GM12878 (cell line): ENCODE measurements at regions of chr3 and their contacts with region 1.

Region 1: GRCh38 chr3:141402476-141403171 is 34.3 kb downstream of the ZBTB38 start:
- DNase-seq: no peak
- ATAC-seq: peak; percentile 61
- H3K4me3 ChIP-seq: peak overlapping the region; percentile 72
- H3K27ac ChIP-seq: peak overlapping the region; percentile 92
- H3K4me1 ChIP-seq: peaks cover 29% of the 10 kb centered on the region
- H3K27me3 ChIP-seq: no peaks in the 10 kb centered on the region
- CTCF ChIP-seq: no peak
- EP300 ChIP-seq: no peak
- POLR2A ChIP-seq: peak; percentile 63
- RAD21 ChIP-seq: no peak

Region 2: DNA sequence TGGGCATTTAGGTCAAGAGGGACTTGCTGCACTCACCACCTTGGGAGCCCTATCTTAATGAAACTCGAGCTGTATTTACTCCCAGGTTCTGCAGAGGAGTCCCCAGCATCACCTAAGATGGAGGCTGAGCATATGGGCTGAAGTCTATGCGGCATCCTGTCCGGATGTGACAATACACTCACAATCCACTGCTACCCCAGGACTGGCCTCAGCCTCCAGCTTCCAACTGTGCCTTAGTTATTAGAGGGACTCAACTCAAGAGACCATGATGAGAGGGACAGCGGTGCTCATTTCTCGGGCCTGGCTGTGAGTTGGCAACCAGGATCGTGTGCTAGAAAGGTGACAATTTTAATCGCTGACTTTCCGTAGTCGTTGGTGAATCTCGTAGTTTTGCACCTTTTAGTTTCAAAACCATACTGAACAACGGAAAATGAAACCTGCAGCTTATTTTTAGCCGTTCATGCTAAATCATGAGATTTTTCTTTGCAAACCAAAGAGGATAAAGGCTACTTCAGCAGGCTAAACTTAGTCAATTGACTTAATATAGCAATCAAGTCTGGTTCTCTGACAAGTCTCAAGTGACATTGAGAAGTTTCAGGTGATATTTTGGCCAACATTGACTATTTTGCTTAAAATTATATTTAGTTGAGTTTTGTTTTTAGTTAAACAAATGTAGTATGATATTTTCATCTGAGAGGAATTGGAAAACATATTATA is 23.2 kb before region 1 on chr3:
- CTCF ChIA-PET with region 1: interaction called, 56 read pairs
- POLR2A ChIA-PET with region 1: interaction called, 453 read pairs
- RAD21 ChIA-PET with region 1: interaction called, 387 read pairs
- SMC1A ChIA-PET with region 1: interaction called, 573 read pairs
- in situ Hi-C with region 1: no loop called
- intact Hi-C with region 1: no loop called
- DNase-seq: peak; percentile 95
- ATAC-seq: peak; percentile 62
- H3K4me3 ChIP-seq: peak overlapping the region; percentile 41; the same call in 1 of the 2 replicates
- H3K27ac ChIP-seq: peak overlapping the region; percentile 94
- H3K4me1 ChIP-seq: peaks cover 81% of the 10 kb centered on the region
- H3K27me3 ChIP-seq: no peaks in the 10 kb centered on the region
- CTCF ChIP-seq: no peak
- EP300 ChIP-seq: peak; percentile 93 to 98
- POLR2A ChIP-seq: peak; percentile 68
- RAD21 ChIP-seq: peak; percentile 21; the same call in 1 of the 2 replicates

Region 3: GRCh38 chr3:141386611-141387111 is 16.0 kb before region 1 on chr3:
- CTCF ChIA-PET with region 1: interaction called, 56 read pairs
- POLR2A ChIA-PET with region 1: interaction called, 453 read pairs
- RAD21 ChIA-PET with region 1: interaction called, 387 read pairs
- SMC1A ChIA-PET with region 1: interaction called, 573 read pairs
- in situ Hi-C with region 1: no loop called
- intact Hi-C with region 1: no loop called
- DNase-seq: no peak
- ATAC-seq: peak; percentile 58
- H3K4me3 ChIP-seq: peak overlapping the region; percentile 67
- H3K27ac ChIP-seq: peak overlapping the region; percentile 94
- H3K4me1 ChIP-seq: peaks cover 30% of the 10 kb centered on the region
- H3K27me3 ChIP-seq: no peaks in the 10 kb centered on the region
- CTCF ChIP-seq: no peak
- EP300 ChIP-seq: no peak
- POLR2A ChIP-seq: peak; percentile 93
- RAD21 ChIP-seq: no peak

Region 4: DNA sequence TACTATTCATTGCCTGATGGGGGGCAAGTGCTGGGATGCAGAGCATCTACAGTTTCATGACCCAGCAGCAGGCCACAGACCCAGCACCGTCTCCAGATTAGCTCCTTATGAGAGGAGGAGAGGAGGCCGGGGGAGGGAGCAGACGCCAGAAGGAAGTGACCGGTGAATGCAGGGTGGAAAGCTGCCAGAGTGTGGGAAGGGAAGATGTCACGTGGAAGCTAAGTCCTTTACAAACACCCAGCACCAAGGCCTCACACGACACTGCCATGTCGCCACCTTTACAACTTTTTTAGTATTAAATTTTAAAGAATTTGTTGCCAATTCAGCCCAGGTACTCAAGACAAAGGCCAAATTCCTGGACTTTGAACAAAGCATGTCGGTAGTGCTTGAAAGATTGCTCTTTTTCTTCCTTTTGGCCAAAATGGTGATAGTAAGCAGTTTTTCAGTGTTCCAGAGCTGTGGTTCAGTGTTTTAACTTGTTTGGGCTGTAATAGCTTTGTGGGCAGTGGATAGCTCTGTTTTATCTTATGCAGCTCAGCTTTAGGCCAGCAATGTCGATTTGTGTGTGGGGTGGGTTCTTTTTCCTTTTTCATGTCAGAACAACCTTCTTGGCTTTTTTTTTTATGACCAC is 23.9 kb after region 1 on chr3:
- CTCF ChIA-PET with region 1: interaction called, 5 read pairs
- POLR2A ChIA-PET with region 1: interaction called, 3 read pairs
- RAD21 ChIA-PET with region 1: interaction called, 3 read pairs
- SMC1A ChIA-PET with region 1: interaction called, 12 read pairs
- in situ Hi-C with region 1: no loop called
- intact Hi-C with region 1: no loop called
- DNase-seq: no peak
- ATAC-seq: no peak
- H3K4me3 ChIP-seq: no peak overlapping the region
- H3K27ac ChIP-seq: no peak overlapping the region
- H3K4me1 ChIP-seq: peaks cover 7% of the 10 kb centered on the region
- H3K27me3 ChIP-seq: no peaks in the 10 kb centered on the region
- CTCF ChIP-seq: no peak
- EP300 ChIP-seq: no peak
- POLR2A ChIP-seq: no peak
- RAD21 ChIP-seq: no peak

Region 5: GRCh38 chr3:141680620-141681389 is 278.2 kb after region 1 on chr3:
- CTCF ChIA-PET with region 1: no interaction called
- POLR2A ChIA-PET with region 1: no interaction called
- RAD21 ChIA-PET with region 1: no interaction called
- SMC1A ChIA-PET with region 1: no interaction called
- in situ Hi-C with region 1: no loop called
- intact Hi-C with region 1: no loop called
- DNase-seq: no peak
- ATAC-seq: no peak
- H3K4me3 ChIP-seq: no peak overlapping the region
- H3K27ac ChIP-seq: no peak overlapping the region
- H3K4me1 ChIP-seq: no peaks in the 10 kb centered on the region
- H3K27me3 ChIP-seq: no peaks in the 10 kb centered on the region
- CTCF ChIP-seq: no peak
- EP300 ChIP-seq: no peak
- POLR2A ChIP-seq: no peak
- RAD21 ChIP-seq: no peak

Region 6: DNA sequence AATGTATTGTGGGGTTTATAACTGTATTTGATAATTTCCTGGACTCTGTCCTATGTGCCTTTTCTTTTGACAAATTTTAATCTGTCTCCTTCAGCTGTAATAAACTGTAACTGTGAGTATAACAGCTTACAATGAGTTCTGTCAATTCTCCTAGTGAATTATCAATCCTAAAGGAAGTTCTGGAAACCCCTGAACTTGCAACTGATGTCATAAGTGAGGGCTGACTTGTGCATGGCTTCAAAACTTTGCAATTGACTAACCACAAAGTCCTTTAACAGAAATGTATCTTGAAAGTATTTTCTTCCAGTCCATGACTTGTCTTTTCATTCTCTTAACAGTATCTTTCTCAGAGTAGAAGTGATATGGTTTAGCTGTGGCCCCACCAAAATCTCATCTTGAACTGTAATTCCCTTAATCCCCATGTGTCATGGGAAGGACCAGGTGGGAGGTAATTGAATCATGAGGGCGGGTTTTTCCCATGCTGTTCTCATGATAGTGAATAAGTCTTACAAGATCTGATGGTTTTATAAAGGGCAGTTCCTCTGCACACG is 638.4 kb after region 1 on chr3:
- CTCF ChIA-PET with region 1: no interaction called
- POLR2A ChIA-PET with region 1: no interaction called
- RAD21 ChIA-PET with region 1: no interaction called
- SMC1A ChIA-PET with region 1: no interaction called
- in situ Hi-C with region 1: no loop called
- intact Hi-C with region 1: no loop called
- DNase-seq: no peak
- ATAC-seq: no peak; the same call in 2 of the 3 replicates
- H3K4me3 ChIP-seq: no peak overlapping the region
- H3K27ac ChIP-seq: no peak overlapping the region
- H3K4me1 ChIP-seq: no peaks in the 10 kb centered on the region
- H3K27me3 ChIP-seq: no peaks in the 10 kb centered on the region
- CTCF ChIP-seq: no peak
- EP300 ChIP-seq: no peak
- POLR2A ChIP-seq: no peak
- RAD21 ChIP-seq: no peak